ENCODE measurements at regions of chr20 and their contacts with region 1.

Region 1: GRCh38 chr20:35954200-35954906 is at the start of gene SCAND1:
- DNase-seq: peak; percentile 95
- ATAC-seq: peak; percentile 94
- H3K4me3 ChIP-seq: peak within 1 kb of the TSS; percentile 69
- H3K27ac ChIP-seq: peak within 1 kb of the TSS; percentile 85
- H3K4me1 ChIP-seq: peaks cover 3% of the 10 kb centered on the region; the same call in 1 of the 2 replicates
- H3K27me3 ChIP-seq: no peaks in the 10 kb centered on the region
- CTCF ChIP-seq: peak; percentile 99
- POLR2A ChIP-seq: peak; percentile 92
- RAD21 ChIP-seq: peak; percentile 53
- total RNA-seq, gene SCAND1: 7.5 and 11.7 TPM in 2 replicates

Region 2: GRCh38 chr20:35699127-35699975 is 255.0 kb before region 1 on chr20 and contains the starts of genes NFS1 and ROMO1:
- CTCF ChIA-PET with region 1: no interaction called
- POLR2A ChIA-PET with region 1: no interaction called
- dilution Hi-C with region 1: no loop called
- in situ Hi-C with region 1: no loop called
- intact Hi-C with region 1: loop called (anchors 5 kb)
- DNase-seq: peak; percentile 76
- ATAC-seq: peak; percentile 84
- H3K4me3 ChIP-seq: peak within 1 kb of the TSS; percentile 73
- H3K27ac ChIP-seq: peak within 1 kb of the TSS; percentile 77
- H3K4me1 ChIP-seq: peaks cover 5% of the 10 kb centered on the region
- H3K27me3 ChIP-seq: no peaks in the 10 kb centered on the region
- CTCF ChIP-seq: peak; percentile 34; the same call in 1 of the 2 replicates
- POLR2A ChIP-seq: peak; percentile 78
- RAD21 ChIP-seq: 0 out of 2 replicates have a peak, but pooled peaks have one; percentile 20
- total RNA-seq, gene NFS1: 11.4 and 16.5 TPM in 2 replicates
- total RNA-seq, gene ROMO1: 223 and 397 TPM in 2 replicates

Region 3: GRCh38 chr20:35942243-35942642 is 12.1 kb before region 1 on chr20:
- CTCF ChIA-PET with region 1: interaction called, 12 read pairs
- POLR2A ChIA-PET with region 1: interaction called, 4 read pairs
- dilution Hi-C with region 1: no loop called
- in situ Hi-C with region 1: no loop called
- intact Hi-C with region 1: no loop called
- DNase-seq: no peak
- ATAC-seq: no peak
- H3K4me3 ChIP-seq: no peak overlapping the region
- H3K27ac ChIP-seq: no peak overlapping the region
- H3K4me1 ChIP-seq: peaks cover 8% of the 10 kb centered on the region
- H3K27me3 ChIP-seq: no peaks in the 10 kb centered on the region
- CTCF ChIP-seq: no peak
- POLR2A ChIP-seq: no peak
- RAD21 ChIP-seq: no peak

Region 4: GRCh38 chr20:35967979-35968640 is 13.8 kb after region 1 on chr20 and contains the start of gene CNBD2:
- CTCF ChIA-PET with region 1: interaction called, 11 read pairs
- POLR2A ChIA-PET with region 1: no interaction called
- dilution Hi-C with region 1: no loop called
- in situ Hi-C with region 1: no loop called
- intact Hi-C with region 1: no loop called
- DNase-seq: no peak
- ATAC-seq: no peak
- H3K4me3 ChIP-seq: no peak within 1 kb of the TSS
- H3K27ac ChIP-seq: no peak within 1 kb of the TSS
- H3K4me1 ChIP-seq: no peaks in the 10 kb centered on the region
- H3K27me3 ChIP-seq: peaks cover 10% of the 10 kb centered on the region
- CTCF ChIP-seq: no peak
- POLR2A ChIP-seq: no peak
- RAD21 ChIP-seq: no peak
- total RNA-seq, gene CNBD2: 0.56 and 0.90 TPM in 2 replicates

Region 5: DNA sequence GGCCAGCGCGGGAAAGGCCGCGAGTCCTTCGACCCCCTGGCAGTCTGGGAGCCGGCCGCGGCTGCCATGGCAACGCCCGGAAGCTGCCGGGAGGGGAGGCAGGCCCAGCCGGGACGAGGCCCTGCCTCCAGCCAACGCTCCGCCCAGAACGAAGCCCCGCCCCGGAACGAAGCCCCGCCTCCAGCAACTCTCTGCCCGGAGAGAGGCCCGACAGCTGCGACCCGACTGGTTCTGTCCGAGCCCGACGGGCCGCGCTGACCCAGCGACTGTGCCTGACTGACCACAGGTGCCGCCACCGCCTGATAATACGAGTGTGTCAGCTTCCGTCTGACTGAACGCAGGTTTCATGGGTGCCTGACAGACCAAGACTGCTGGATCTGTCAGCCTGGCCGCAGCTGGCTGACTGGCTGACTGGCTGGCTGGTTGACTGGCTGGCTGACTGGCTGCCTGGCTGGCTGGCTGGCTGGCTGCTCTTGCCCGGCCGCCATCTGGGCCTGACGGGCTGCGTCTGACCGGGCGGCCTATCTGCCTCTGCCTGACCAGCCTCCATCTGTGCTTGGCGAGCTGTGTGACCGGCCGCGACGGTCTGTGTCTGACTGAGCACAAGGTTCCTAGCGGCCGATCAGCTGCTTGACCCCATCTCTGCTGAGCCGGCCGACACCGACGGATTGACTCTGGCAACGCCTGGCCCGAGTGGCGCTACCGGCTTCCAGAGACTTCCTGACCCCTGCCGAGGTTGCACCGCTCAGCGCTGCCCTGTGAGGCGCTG is 110.5 kb after region 1 on chr20:
- CTCF ChIA-PET with region 1: no interaction called
- POLR2A ChIA-PET with region 1: no interaction called
- dilution Hi-C with region 1: no loop called
- in situ Hi-C with region 1: no loop called
- intact Hi-C with region 1: no loop called
- DNase-seq: peak; percentile 70
- ATAC-seq: peak; percentile 100
- H3K4me3 ChIP-seq: peak overlapping the region; percentile 56
- H3K27ac ChIP-seq: peak overlapping the region; percentile 39
- H3K4me1 ChIP-seq: 0 out of 2 replicates have a peak, but pooled peaks cover 1% of the 10 kb centered on the region
- H3K27me3 ChIP-seq: peaks cover 4% of the 10 kb centered on the region; the same call in 1 of the 2 replicates
- CTCF ChIP-seq: no peak
- POLR2A ChIP-seq: no peak
- RAD21 ChIP-seq: no peak

Region 6: DNA sequence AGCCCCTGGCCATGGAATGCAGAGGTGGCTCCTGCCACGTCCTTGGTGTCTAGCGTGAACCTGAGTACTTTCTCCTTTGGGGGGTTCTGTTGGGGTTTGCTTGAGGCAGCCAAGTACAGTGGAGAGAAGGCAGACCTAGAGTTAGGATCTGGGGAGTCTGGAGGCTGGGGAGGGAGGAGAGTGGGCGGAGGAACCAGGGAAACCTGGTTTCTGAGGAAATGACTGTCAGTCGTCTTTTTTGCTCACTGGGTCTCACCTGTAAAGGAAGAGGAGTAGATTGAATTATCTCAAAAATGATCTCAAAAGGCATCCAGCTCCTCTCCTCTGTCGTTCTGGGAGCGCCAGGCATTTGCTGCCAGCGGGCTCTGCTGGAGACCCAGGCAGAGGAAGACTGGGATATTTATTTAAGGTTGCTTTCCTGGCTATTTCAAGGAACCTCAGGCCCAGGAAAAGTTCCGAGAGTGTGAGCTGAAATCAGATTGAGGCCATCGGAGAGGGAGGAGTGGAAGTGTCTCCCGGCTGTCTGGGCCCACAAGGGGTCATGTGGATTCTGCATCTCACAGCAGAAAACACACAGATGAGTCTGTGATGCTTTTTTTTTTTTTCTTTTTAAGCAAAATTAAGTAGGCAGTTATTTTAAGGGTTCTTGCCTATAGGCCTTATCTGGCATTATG is 216.3 kb after region 1 on chr20:
- CTCF ChIA-PET with region 1: no interaction called
- POLR2A ChIA-PET with region 1: interaction called, 12 read pairs
- dilution Hi-C with region 1: no loop called
- in situ Hi-C with region 1: no loop called
- intact Hi-C with region 1: no loop called
- DNase-seq: no peak
- ATAC-seq: no peak
- H3K4me3 ChIP-seq: no peak overlapping the region
- H3K27ac ChIP-seq: no peak overlapping the region
- H3K4me1 ChIP-seq: peaks cover 11% of the 10 kb centered on the region
- H3K27me3 ChIP-seq: no peaks in the 10 kb centered on the region
- CTCF ChIP-seq: no peak
- POLR2A ChIP-seq: no peak
- RAD21 ChIP-seq: no peak